ENCODE measurements at regions of chr3 and their contacts with region 1.

Region 1: GRCh38 chr3:186852994-186853393 is 10.5 kb downstream of the ADIPOQ start:
- DNase-seq: no peak
- H3K4me3 ChIP-seq: no peak overlapping the region
- H3K27ac ChIP-seq: no peak overlapping the region
- H3K4me1 ChIP-seq: no peaks in the 10 kb centered on the region
- H3K27me3 ChIP-seq: no peaks in the 10 kb centered on the region
- CTCF ChIP-seq: no peak
- EP300 ChIP-seq: no peak
- POLR2A ChIP-seq: no peak

Region 2: DNA sequence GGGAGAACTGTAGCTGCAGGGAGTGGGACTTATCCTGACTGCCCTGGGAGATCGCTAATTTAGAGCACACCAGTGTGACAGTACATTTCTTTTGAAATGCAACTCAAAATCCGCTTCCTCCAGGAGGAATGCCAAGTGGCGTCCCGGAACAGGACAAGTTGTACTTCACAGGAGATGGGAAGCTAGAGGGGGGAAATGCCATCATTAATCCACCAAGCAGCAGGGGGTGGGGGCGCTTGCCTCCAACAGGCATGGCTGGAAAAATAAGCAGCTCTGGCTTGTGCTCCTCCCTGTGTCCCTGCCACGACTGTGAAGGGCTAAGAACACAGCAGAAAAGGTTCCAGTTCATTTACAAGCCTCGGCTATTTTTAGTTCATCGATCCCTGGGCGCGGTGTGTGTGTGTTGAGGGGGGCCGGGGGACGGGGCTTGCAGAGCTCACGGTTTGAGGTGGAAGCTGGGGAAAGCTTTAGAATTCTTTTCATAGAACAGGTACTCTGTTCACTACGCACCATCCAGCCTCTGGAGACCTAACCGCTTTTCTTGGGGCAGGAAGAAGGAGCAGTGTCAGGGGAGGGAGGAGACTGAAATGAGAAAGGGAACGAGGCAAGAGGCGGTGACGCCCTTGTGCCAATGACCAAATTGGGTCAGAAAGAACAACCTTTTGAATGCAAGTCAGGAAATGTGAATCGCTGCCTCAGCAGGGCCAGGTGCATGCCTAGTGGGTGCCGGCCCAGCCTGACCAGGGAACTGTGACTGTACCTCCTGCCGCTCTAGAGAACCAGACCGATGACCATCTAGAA is 439.2 kb before region 1 on chr3:
- intact Hi-C with region 1: no loop called
- DNase-seq: peak; percentile 49 to 51
- H3K4me3 ChIP-seq: peak overlapping the region; percentile 31 to 40 (median 37)
- H3K27ac ChIP-seq: peak overlapping the region; percentile 1 to 91 (median 72)
- H3K4me1 ChIP-seq: peaks cover 7 to 36% (median 19%) of the 10 kb centered on the region in 4 donors
- H3K27me3 ChIP-seq: no peaks in the 10 kb centered on the region
- CTCF ChIP-seq: no peak
- EP300 ChIP-seq: peak; percentile 92
- POLR2A ChIP-seq: no peak

Region 3: DNA sequence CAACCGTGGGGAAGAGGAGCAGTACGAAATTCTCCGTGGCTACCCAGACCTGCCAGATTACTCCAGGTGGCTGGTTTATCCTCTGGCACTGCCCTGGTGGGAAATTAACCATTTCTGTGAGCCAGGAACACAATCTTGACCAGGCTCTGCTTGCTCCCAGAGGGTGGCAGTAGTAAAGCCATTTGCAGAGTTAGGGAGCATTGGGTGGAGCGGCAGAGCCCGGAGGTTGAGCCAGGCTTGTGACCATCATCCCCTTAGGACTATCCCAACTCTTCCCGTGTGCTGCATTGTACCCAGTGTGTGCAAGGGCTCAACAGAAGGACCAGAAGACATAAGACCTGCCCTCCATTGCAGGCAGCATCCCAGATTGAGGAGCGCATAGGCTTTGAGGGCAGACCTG is 130.5 kb before region 1 on chr3:
- intact Hi-C with region 1: no loop called
- DNase-seq: peak in 1 of 2 donors; percentile 42
- H3K4me3 ChIP-seq: no peak overlapping the region
- H3K27ac ChIP-seq: no peak overlapping the region
- H3K4me1 ChIP-seq: peaks cover 0 to 5% (median 0%) of the 10 kb centered on the region in 4 donors
- H3K27me3 ChIP-seq: no peaks in the 10 kb centered on the region
- CTCF ChIP-seq: no peak
- EP300 ChIP-seq: no peak
- POLR2A ChIP-seq: no peak

Region 4: DNA sequence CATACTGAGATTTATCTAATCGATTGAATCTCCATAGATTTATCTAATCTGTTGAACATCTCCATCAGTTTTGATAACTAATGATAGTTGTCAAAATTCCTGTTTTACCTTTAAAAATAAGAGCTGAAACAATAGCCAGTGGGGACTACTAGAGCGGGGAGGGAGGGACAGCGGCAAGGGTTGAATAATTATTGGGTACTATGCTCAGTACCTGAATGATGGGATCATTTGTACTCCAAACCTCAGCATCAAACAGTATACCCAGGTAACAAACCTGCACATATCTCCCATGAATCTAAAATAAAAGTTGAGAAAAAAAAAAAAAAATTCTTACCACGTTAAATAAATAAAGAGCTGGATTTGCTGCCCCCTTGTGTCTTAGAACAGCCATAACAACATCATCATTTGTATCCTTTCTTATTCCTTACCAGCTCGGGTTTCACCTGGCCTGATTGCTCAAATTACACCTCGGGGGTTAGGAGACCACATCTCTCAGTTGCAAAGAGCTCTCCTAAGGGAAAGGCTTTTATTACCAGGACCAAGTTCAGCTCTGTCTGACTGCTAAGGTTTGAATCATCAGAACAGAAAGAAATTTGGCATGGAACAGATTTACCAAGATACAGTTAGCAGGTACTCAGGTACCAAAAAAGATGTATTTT is 312.0 kb after region 1 on chr3:
- intact Hi-C with region 1: loop called (anchors 5 kb)
- DNase-seq: peak in 1 of 2 donors; percentile 82
- H3K4me3 ChIP-seq: no peak overlapping the region
- H3K27ac ChIP-seq: no peak overlapping the region
- H3K4me1 ChIP-seq: peaks cover 0 to 11% (median 2%) of the 10 kb centered on the region in 4 donors
- H3K27me3 ChIP-seq: no peaks in the 10 kb centered on the region
- CTCF ChIP-seq: peak in 5 of 7 experiments; percentile 61 to 80 (median 72)
- EP300 ChIP-seq: no peak
- POLR2A ChIP-seq: no peak